Spleen (tissue), 13 donors: ENCODE measurements at regions of chr22 and their contacts with region 1.

Region 1: GRCh38 chr22:33018232-33018864 is 39.8 kb downstream of the SYN3 start:
- DNase-seq: no peak
- H3K4me3 ChIP-seq: no peak overlapping the region
- H3K27ac ChIP-seq: no peak overlapping the region
- H3K4me1 ChIP-seq: peaks cover 0 to 7% (median 0%) of the 10 kb centered on the region in 6 donors
- H3K27me3 ChIP-seq: no peaks in the 10 kb centered on the region
- CTCF ChIP-seq: peak; percentile 55 to 90 (median 84)
- POLR2A ChIP-seq: peak in 1 of 3 donors; percentile 7

Region 2: GRCh38 chr22:32796865-32797573 is 221.3 kb before region 1 on chr22:
- intact Hi-C with region 1: no loop called
- DNase-seq: peak; percentile 83
- H3K4me3 ChIP-seq: no peak overlapping the region
- H3K27ac ChIP-seq: peak overlapping the region in 1 of 8 donors; percentile 37
- H3K4me1 ChIP-seq: peaks cover 0 to 26% (median 14%) of the 10 kb centered on the region in 6 donors
- H3K27me3 ChIP-seq: peaks cover 0 to 47% (median 10%) of the 10 kb centered on the region in 7 donors
- CTCF ChIP-seq: peak; percentile 61 to 90 (median 80)
- POLR2A ChIP-seq: no peak

Region 3: GRCh38 chr22:33076343-33076742 is 58.0 kb after region 1 on chr22:
- intact Hi-C with region 1: no loop called
- DNase-seq: no peak
- H3K4me3 ChIP-seq: no peak overlapping the region
- H3K27ac ChIP-seq: no peak overlapping the region
- H3K4me1 ChIP-seq: no peaks in the 10 kb centered on the region
- H3K27me3 ChIP-seq: peaks cover 0 to 25% (median 0%) of the 10 kb centered on the region in 7 donors
- CTCF ChIP-seq: no peak
- POLR2A ChIP-seq: no peak

Region 4: GRCh38 chr22:33209930-33210784 is 191.8 kb after region 1 on chr22:
- intact Hi-C with region 1: loop called (anchors 10 kb)
- DNase-seq: no peak
- H3K4me3 ChIP-seq: no peak overlapping the region
- H3K27ac ChIP-seq: no peak overlapping the region
- H3K4me1 ChIP-seq: peaks cover 0 to 5% (median 0%) of the 10 kb centered on the region in 6 donors
- H3K27me3 ChIP-seq: peaks cover 0 to 18% (median 0%) of the 10 kb centered on the region in 7 donors
- CTCF ChIP-seq: peak in 8 of 11 experiments; percentile 22 to 65 (median 51)
- POLR2A ChIP-seq: no peak